Caki2 (cell line): ENCODE measurements at regions of chr5 and their contacts with region 1.

Region 1: GRCh38 chr5:174418928-174419796 is 305.2 kb upstream of the MSX2 start:
- DNase-seq: peak; percentile 92

Region 2: GRCh38 chr5:174327317-174328236 is 91.6 kb before region 1 on chr5:
- in situ Hi-C with region 1: loop called (anchors 10 kb)
- DNase-seq: peak; percentile 88

Region 3: DNA sequence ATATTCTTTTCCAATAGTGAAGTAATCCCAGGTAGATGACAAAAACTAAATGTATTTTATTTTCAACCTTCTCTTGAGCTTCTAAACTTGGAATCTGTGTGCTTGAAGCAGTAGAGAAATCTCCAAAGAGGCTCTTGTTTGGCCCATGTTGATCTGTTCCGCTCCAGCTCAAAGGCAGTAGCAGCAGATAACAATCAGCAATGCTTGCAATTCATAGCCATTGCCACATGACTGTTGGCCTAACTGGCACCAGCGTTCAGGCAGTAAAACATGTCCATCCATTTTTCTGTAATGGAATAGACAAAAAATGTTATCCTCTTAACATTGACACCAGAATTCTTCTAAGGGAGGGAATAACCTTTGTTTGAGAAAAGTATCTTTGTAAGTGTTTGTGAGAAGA is 34.5 kb after region 1 on chr5:
- in situ Hi-C with region 1: no loop called
- DNase-seq: no peak